MCF 10A (cell line): ENCODE measurements at regions of chr3 and their contacts with region 1.

Region 1: GRCh38 chr3:11770477-11771391 is 76.0 kb downstream of the TAMM41 start:
- DNase-seq: peak; percentile 94
- H3K4me3 Mint-ChIP-seq: peak overlapping the region; percentile 50
- H3K27ac Mint-ChIP-seq: peak overlapping the region; percentile 88
- H3K4me1 Mint-ChIP-seq: peaks cover 30% of the 10 kb centered on the region
- H3K27me3 Mint-ChIP-seq: no peaks in the 10 kb centered on the region
- CTCF ChIP-seq: no peak

Region 2: GRCh38 chr3:11626084-11626463 is 144.7 kb before region 1 on chr3:
- CTCF ChIA-PET with region 1: no interaction called
- POLR2A ChIA-PET with region 1: no interaction called
- intact Hi-C with region 1: no loop called
- DNase-seq: no peak
- H3K4me3 Mint-ChIP-seq: no peak overlapping the region
- H3K27ac Mint-ChIP-seq: no peak overlapping the region
- H3K4me1 Mint-ChIP-seq: peaks cover 24% of the 10 kb centered on the region
- H3K27me3 Mint-ChIP-seq: no peaks in the 10 kb centered on the region
- CTCF ChIP-seq: no peak

Region 3: GRCh38 chr3:11699083-11699427 is 71.7 kb before region 1 on chr3:
- CTCF ChIA-PET with region 1: no interaction called
- POLR2A ChIA-PET with region 1: no interaction called
- intact Hi-C with region 1: no loop called
- DNase-seq: peak; percentile 5
- H3K4me3 Mint-ChIP-seq: no peak overlapping the region
- H3K27ac Mint-ChIP-seq: no peak overlapping the region
- H3K4me1 Mint-ChIP-seq: peaks cover 7% of the 10 kb centered on the region
- H3K27me3 Mint-ChIP-seq: no peaks in the 10 kb centered on the region
- CTCF ChIP-seq: no peak

Region 4: GRCh38 chr3:11711876-11712275 is 58.9 kb before region 1 on chr3:
- CTCF ChIA-PET with region 1: interaction called, 4 read pairs
- POLR2A ChIA-PET with region 1: interaction called, 72 read pairs
- intact Hi-C with region 1: no loop called
- DNase-seq: no peak
- H3K4me3 Mint-ChIP-seq: no peak overlapping the region
- H3K27ac Mint-ChIP-seq: peak overlapping the region; percentile 29
- H3K4me1 Mint-ChIP-seq: peaks cover 19% of the 10 kb centered on the region
- H3K27me3 Mint-ChIP-seq: no peaks in the 10 kb centered on the region
- CTCF ChIP-seq: no peak

Region 5: DNA sequence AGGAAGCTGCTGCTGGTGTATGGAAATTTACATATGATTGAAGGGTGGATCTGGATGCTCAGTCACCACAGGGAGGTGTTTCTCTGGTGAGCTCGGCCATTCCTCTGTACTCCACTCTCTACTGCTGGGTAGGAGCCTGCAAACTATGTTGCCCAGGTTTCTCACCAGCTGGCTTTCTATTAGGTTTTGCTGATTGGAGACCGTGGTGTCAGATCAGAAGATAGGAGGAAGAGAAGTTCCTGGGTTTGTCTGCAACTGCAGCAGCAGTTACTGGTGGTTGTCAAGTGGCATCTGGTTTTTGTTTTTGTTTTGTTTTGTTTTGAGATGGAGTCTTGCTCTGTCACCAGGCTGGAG is 14.3 kb after region 1 on chr3:
- CTCF ChIA-PET with region 1: interaction called, 9 read pairs
- POLR2A ChIA-PET with region 1: interaction called, 12 read pairs
- intact Hi-C with region 1: no loop called
- DNase-seq: no peak
- H3K4me3 Mint-ChIP-seq: no peak overlapping the region
- H3K27ac Mint-ChIP-seq: no peak overlapping the region
- H3K4me1 Mint-ChIP-seq: no peaks in the 10 kb centered on the region
- H3K27me3 Mint-ChIP-seq: no peaks in the 10 kb centered on the region
- CTCF ChIP-seq: no peak

Region 6: DNA sequence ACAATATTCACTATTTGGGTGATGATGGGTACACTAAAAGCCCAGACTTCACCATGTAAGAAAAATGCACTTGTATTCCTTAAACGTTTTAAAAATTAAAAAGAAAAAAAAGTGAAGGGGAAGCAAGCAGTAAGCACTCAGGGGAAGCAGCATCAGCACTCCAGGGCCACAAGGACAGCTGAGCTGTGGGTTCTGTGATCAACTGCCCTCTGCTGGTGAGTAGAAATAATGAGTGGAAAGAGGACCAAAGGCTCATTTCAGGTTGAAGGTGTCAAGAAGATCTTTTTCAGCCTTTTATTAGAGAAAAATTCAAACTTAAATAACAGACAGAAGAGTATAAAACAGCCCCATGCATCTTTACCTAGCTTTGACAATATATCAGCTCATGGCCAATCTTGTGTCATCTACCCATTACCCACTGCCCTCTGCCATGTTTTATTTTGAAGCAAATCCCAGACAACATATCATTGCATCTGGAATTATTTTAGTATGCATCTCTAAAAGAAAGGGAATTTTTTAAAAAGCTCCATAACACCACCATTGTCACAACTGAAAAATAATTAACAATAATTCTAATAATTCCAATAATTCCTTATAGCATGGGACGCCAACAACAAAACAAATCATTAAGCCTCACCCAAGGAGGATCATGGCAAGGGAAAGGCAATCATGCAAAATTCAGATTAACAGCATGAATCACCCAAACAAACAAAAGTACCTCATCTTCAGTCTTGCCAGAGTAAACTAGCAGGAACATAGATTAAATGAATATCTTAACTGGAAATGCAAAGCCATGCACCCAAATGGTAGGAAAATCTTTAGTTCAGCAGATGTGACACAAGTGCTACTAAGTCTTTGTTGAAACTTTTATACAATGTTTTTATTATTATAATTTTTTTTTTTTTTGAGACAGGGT is 33.5 kb after region 1 on chr3:
- CTCF ChIA-PET with region 1: interaction called, 13 read pairs
- POLR2A ChIA-PET with region 1: interaction called, 6 read pairs
- intact Hi-C with region 1: loop called (anchors 1 kb)
- DNase-seq: peak; percentile 64
- H3K4me3 Mint-ChIP-seq: no peak overlapping the region
- H3K27ac Mint-ChIP-seq: no peak overlapping the region
- H3K4me1 Mint-ChIP-seq: no peaks in the 10 kb centered on the region
- H3K27me3 Mint-ChIP-seq: no peaks in the 10 kb centered on the region
- CTCF ChIP-seq: peak; percentile 71

Region 7: DNA sequence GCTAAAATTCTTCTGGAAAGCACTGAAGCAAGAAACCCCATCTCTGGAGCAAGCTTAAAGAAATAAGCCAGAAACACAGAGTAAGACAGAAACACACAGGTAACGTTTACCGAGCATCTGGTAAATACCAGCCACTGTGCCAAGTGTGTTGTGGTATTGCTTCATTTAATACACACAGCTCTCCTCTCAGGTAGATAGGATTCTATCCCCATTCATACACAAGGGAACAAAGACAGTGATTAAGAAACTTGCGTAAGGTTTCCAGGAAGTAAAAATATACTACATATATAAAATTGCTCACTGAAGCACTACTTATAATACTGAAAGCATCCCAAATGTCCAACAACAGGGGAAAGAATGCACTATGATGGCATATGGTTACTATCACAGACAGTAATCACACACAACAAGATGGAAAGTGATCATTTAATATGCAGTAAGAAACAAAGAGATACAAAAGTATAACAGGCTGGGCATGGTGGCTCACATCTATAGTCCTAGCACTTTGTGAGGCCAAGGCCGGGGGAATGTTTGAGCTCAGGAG is 48.5 kb after region 1 on chr3:
- CTCF ChIA-PET with region 1: interaction called, 4 read pairs
- POLR2A ChIA-PET with region 1: interaction called, 10 read pairs
- intact Hi-C with region 1: no loop called
- DNase-seq: peak; percentile 56
- H3K4me3 Mint-ChIP-seq: no peak overlapping the region
- H3K27ac Mint-ChIP-seq: no peak overlapping the region
- H3K4me1 Mint-ChIP-seq: peaks cover 30% of the 10 kb centered on the region
- H3K27me3 Mint-ChIP-seq: no peaks in the 10 kb centered on the region
- CTCF ChIP-seq: no peak